ENCODE measurements at regions of chr4 and their contacts with region 1.

Region 1: GRCh38 chr4:77367638-77368037 is 210.6 kb downstream of the CCNG2 start:
- DNase-seq: no peak
- H3K4me3 Mint-ChIP-seq: no peak overlapping the region
- H3K27ac Mint-ChIP-seq: no peak overlapping the region
- H3K4me1 Mint-ChIP-seq: no peaks in the 10 kb centered on the region
- H3K27me3 Mint-ChIP-seq: peaks cover 4% of the 10 kb centered on the region

Region 2: DNA sequence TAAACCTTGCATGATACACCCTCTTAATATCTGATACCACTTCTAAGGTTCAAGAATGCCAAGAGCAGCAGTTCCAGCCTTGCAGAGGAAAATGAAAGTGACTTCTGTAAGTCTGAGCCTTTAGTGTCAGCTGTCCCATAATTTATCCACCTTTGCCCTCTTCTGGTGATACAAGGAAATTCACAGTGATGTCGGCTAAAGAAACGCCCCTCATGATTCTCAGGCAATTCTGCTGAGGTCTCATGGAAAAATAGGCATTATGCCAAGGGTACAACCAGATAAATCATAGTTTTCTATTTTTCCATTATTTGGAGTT is 65.7 kb after region 1 on chr4:
- CTCF ChIA-PET with region 1: interaction called, 15 read pairs
- intact Hi-C with region 1: loop called (anchors 5 kb)
- DNase-seq: peak; percentile 39
- H3K4me3 Mint-ChIP-seq: no peak overlapping the region
- H3K27ac Mint-ChIP-seq: no peak overlapping the region
- H3K4me1 Mint-ChIP-seq: peaks cover 13% of the 10 kb centered on the region
- H3K27me3 Mint-ChIP-seq: no peaks in the 10 kb centered on the region

Region 3: DNA sequence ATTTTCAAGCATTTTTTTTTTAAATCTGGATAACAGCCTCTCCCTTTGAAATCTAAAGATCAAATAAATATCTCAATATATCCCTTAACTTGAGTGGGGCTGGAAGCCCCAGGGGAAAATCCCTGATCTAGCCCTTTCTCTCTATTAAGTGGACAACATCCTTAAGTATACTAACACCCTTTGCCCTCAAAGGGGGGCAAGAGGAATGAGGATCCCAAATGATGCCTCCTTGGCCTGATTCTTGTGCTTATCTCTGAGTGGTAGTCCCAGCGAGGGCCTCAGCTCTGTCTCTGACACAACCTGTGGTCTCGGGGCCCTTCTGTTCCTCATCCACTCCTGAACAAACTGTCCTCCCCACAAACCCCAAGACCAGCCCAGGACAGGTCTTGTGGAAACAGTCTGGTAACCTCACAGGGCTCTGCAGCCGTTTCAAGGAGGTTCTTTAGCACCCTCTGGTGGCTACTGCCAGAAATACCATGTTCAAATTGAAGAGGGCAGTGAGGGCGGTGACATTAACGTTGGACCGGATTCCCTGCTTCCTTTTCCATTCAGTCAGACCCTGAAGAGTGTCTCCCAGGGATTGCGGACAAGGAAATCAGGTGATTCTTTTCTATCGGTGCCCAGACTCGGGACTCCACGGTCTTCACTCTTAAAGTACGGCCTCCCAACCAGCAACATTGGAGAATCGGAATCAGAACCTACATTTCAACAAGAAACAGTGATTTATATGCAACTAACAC is 250.9 kb after region 1 on chr4:
- CTCF ChIA-PET with region 1: interaction called, 6 read pairs
- intact Hi-C with region 1: loop called (anchors 5 kb)
- DNase-seq: peak; percentile 81
- H3K4me3 Mint-ChIP-seq: no peak overlapping the region
- H3K27ac Mint-ChIP-seq: no peak overlapping the region
- H3K4me1 Mint-ChIP-seq: peaks cover 2% of the 10 kb centered on the region
- H3K27me3 Mint-ChIP-seq: peaks cover 12% of the 10 kb centered on the region